ENCODE measurements at regions of chr7 and their contacts with region 1.

Region 1: DNA sequence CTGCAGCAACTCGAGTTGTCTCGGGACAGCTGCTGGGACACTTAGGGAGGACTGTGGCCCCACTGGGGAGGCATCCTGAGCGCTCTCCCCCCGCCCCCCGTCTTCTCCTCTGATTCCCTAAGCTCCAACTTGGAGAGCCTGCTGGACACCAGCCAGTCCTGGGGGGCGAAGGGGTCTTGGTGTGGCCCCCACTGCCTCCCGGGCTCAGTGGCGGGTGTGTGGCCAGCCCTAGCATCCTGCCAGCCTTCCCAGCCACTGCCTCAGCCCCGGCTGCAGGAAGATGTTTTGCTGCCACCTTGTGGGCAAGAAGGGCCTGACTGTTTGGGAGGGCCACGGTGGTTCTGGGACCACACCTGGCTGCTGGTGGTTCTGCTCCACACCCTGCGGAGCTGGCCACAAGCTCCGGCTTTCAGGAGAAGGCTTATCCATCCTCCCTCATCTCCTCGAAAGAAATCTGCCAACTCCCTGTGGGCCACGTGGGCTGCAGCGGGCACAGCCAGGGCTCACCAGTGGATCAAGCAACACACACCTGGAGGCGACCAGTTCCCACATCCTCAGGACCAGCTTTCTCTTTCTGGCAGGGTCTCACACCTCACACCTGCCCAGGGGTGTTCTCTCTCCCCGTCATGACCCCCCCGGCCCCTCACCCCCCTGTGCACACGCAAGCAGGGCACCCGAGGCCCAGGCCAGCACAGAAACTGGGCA is 24.8 kb downstream of the AGAP3 start:
- DNase-seq: peak; percentile 69 to 76 (median 72)
- H3K4me3 ChIP-seq: no peak overlapping the region
- H3K4me3 Mint-ChIP-seq: peak overlapping the region in 1 of 8 donors; percentile 30
- H3K27ac ChIP-seq: no peak overlapping the region
- H3K27ac Mint-ChIP-seq: peak overlapping the region in 1 of 7 donors; percentile 57
- H3K4me1 ChIP-seq: peaks cover 10% of the 10 kb centered on the region
- H3K4me1 Mint-ChIP-seq: peaks cover 1 to 20% (median 10%) of the 10 kb centered on the region in 4 donors
- H3K27me3 ChIP-seq: no peaks in the 10 kb centered on the region
- H3K27me3 Mint-ChIP-seq: no peaks in the 10 kb centered on the region

Region 2: GRCh38 chr7:150778738-150779301 is 332.3 kb before region 1 on chr7:
- CTCF ChIA-PET with region 1: interaction called, 8 read pairs
- POLR2A ChIA-PET with region 1: no interaction called
- intact Hi-C with region 1: loop called (anchors 1 kb)
- DNase-seq: peak; percentile 53 to 61 (median 57)
- H3K4me3 ChIP-seq: no peak overlapping the region
- H3K4me3 Mint-ChIP-seq: no peak overlapping the region
- H3K27ac ChIP-seq: no peak overlapping the region
- H3K27ac Mint-ChIP-seq: no peak overlapping the region
- H3K4me1 ChIP-seq: no peaks in the 10 kb centered on the region
- H3K4me1 Mint-ChIP-seq: peaks cover 0 to 5% (median 5%) of the 10 kb centered on the region in 4 donors
- H3K27me3 ChIP-seq: no peaks in the 10 kb centered on the region
- H3K27me3 Mint-ChIP-seq: peaks cover 0 to 6% of the 10 kb centered on the region in 2 donors

Region 3: DNA sequence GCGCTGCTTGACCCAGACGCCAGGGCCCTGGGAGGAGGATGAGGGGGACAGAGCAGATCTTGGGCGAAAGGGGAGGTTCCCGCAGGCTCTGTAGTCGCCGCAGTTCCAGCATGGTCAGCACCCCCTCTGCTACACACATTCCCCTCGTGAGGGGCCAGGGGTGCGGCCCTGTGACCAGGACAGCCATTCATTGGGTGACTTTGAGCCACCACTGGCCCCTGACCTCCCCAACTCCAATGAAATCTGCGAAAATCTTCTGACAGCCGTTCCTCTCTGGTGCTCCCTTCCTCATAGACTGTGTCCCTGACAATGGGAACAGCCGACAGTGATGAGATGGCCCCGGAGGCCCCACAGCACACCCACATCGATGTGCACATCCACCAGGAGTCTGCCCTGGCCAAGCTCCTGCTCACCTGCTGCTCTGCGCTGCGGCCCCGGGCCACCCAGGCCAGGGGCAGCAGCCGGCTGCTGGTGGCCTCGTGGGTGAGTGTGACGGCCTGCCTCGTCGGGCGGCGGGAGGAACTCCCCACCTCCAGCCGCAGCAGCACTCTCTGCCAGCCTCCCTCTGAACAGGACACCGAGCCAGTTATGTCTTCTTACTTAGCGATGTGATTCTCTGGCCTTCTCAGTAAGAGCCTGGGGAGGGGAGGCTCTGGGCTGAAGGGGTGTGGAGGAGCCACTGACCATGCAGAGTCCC is 309.7 kb before region 1 on chr7:
- CTCF ChIA-PET with region 1: no interaction called
- POLR2A ChIA-PET with region 1: no interaction called
- intact Hi-C with region 1: no loop called
- DNase-seq: no peak
- H3K4me3 ChIP-seq: no peak overlapping the region
- H3K4me3 Mint-ChIP-seq: peak overlapping the region; percentile 11 to 81 (median 74)
- H3K27ac ChIP-seq: no peak overlapping the region
- H3K27ac Mint-ChIP-seq: no peak overlapping the region
- H3K4me1 ChIP-seq: peaks cover 14% of the 10 kb centered on the region
- H3K4me1 Mint-ChIP-seq: peaks cover 2 to 14% (median 4%) of the 10 kb centered on the region in 4 donors
- H3K27me3 ChIP-seq: peaks cover 33% of the 10 kb centered on the region
- H3K27me3 Mint-ChIP-seq: peaks cover 37 to 45% of the 10 kb centered on the region in 2 donors

Region 4: DNA sequence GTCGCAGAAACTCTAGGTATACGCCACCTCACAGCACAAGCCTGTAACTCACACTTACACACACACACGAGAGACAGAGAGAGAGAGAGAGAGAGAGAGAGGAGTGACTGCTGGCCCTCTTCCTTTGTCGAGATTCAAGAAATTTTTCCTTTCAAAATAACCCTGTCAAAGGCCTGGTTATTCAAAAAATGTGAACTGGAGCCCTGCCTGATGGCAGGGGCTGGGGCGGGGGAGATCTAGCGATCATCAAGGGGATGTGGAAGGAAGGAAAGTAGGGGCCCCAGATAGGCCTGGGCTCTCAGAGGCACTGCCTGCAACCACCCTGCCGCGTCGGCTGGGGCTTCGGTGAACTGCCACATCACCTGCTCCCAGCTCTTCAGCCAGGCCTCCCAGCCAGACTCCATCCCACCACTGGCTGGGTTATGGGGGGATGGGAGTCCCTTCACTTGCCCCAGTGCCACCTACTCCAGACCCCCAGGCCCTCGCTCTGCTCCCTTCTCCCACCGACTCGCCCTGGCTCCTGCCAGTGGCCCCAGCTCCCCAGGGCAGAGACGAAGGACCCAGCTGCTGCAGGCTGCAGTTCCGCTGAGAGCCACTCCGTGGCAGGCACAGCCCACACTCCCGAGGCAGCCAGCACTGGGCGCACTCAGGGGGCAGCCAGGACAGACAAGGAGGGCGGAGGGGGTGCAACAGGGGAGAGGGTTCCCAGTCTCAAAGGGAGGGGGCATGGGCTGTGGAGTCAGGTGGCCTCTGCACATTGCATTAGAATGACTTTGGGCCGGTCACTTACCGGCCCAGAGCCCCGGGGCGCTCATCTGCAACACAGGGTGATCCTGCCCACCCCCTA is 148.3 kb before region 1 on chr7:
- CTCF ChIA-PET with region 1: interaction called, 67 read pairs
- POLR2A ChIA-PET with region 1: no interaction called
- intact Hi-C with region 1: loop called (anchors 1 kb)
- DNase-seq: peak in 4 of 5 donors; percentile 58 to 63 (median 62)
- H3K4me3 ChIP-seq: no peak overlapping the region
- H3K4me3 Mint-ChIP-seq: no peak overlapping the region
- H3K27ac ChIP-seq: no peak overlapping the region
- H3K27ac Mint-ChIP-seq: no peak overlapping the region
- H3K4me1 ChIP-seq: peaks cover 21% of the 10 kb centered on the region
- H3K4me1 Mint-ChIP-seq: peaks cover 6 to 15% (median 9%) of the 10 kb centered on the region in 4 donors
- H3K27me3 ChIP-seq: no peaks in the 10 kb centered on the region
- H3K27me3 Mint-ChIP-seq: peaks cover 12 to 13% of the 10 kb centered on the region in 2 donors

Region 5: GRCh38 chr7:151003572-151003971 is 107.5 kb before region 1 on chr7:
- CTCF ChIA-PET with region 1: no interaction called
- POLR2A ChIA-PET with region 1: no interaction called
- intact Hi-C with region 1: no loop called
- DNase-seq: no peak
- H3K4me3 ChIP-seq: no peak overlapping the region
- H3K4me3 Mint-ChIP-seq: no peak overlapping the region
- H3K27ac ChIP-seq: no peak overlapping the region
- H3K27ac Mint-ChIP-seq: peak overlapping the region in 3 of 7 donors; percentile 22 to 80 (median 37)
- H3K4me1 ChIP-seq: peaks cover 41% of the 10 kb centered on the region
- H3K4me1 Mint-ChIP-seq: peaks cover 21 to 52% (median 35%) of the 10 kb centered on the region in 4 donors
- H3K27me3 ChIP-seq: no peaks in the 10 kb centered on the region
- H3K27me3 Mint-ChIP-seq: no peaks in the 10 kb centered on the region

Region 6: GRCh38 chr7:151057989-151058780 is 52.9 kb before region 1 on chr7:
- CTCF ChIA-PET with region 1: interaction called, 5 read pairs
- POLR2A ChIA-PET with region 1: interaction called, 5 read pairs
- intact Hi-C with region 1: loop called (anchors 1 kb)
- DNase-seq: peak; percentile 95 to 99 (median 98)
- H3K4me3 ChIP-seq: peak overlapping the region; percentile 45 to 70
- H3K4me3 Mint-ChIP-seq: peak overlapping the region; percentile 86 to 97 (median 94)
- H3K27ac ChIP-seq: peak overlapping the region; percentile 85
- H3K27ac Mint-ChIP-seq: peak overlapping the region; percentile 85 to 99 (median 96)
- H3K4me1 ChIP-seq: peaks cover 45% of the 10 kb centered on the region
- H3K4me1 Mint-ChIP-seq: peaks cover 18 to 54% (median 37%) of the 10 kb centered on the region in 4 donors
- H3K27me3 ChIP-seq: no peaks in the 10 kb centered on the region
- H3K27me3 Mint-ChIP-seq: peaks cover 0 to 2% of the 10 kb centered on the region in 2 donors

Region 7: DNA sequence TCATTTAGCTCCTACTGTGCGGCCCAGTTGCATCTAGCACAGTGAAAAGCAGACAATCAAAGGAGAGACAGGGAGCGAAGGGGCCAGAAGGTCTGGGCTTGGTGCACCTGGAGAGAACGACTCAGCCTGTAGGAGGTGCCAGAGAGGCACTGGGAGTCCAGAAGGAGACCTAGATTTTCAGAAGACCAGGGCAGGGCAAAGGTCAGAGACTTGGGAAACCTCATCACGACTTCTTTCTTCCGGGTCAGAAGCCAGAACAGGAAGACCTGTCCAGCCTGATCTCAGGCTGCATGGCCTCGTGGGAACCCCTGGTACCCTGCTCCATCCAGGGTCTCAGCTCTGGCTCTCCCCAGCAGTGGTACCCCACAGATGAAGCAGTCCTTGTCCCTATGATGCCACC is 19.7 kb before region 1 on chr7:
- CTCF ChIA-PET with region 1: interaction called, 29 read pairs
- POLR2A ChIA-PET with region 1: no interaction called
- intact Hi-C with region 1: loop called (anchors 1 kb)
- DNase-seq: no peak
- H3K4me3 ChIP-seq: no peak overlapping the region
- H3K4me3 Mint-ChIP-seq: no peak overlapping the region
- H3K27ac ChIP-seq: no peak overlapping the region
- H3K27ac Mint-ChIP-seq: peak overlapping the region in 2 of 7 donors; percentile 2 to 29
- H3K4me1 ChIP-seq: peaks cover 25% of the 10 kb centered on the region
- H3K4me1 Mint-ChIP-seq: peaks cover 11 to 24% (median 18%) of the 10 kb centered on the region in 4 donors
- H3K27me3 ChIP-seq: no peaks in the 10 kb centered on the region
- H3K27me3 Mint-ChIP-seq: no peaks in the 10 kb centered on the region

Region 8: DNA sequence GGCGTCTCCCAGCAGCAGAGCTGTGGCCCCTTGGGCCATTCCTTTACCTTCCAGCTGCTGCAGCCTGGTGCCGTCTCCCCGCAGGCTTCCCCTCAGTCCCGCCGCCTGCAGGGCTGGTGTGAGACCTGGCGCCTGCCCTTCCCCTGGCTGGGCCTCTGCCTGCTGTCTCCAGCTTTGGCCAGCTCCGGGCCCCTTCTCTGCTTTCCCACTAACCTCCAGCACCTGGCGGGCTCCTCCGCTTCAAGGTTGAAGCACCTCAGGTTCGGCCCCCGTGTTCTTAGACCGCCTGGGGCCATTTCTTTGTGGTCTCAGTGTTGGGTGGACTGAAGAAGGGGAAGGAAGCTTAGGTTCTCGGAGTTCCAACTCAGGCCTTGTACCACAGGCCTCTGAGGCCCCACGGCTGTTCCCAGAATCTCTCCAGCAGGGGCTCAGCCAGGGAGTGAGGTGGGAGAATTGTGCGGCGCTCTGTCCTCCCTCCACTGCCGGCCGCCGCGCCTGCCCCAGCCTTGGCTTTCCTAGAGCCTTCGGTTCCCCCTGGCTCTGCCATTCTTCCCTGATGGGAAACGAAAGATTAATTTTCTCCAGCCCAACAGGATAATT is 26.1 kb after region 1 on chr7:
- CTCF ChIA-PET with region 1: no interaction called
- POLR2A ChIA-PET with region 1: no interaction called
- intact Hi-C with region 1: no loop called
- DNase-seq: no peak
- H3K4me3 ChIP-seq: no peak overlapping the region
- H3K4me3 Mint-ChIP-seq: no peak overlapping the region
- H3K27ac ChIP-seq: no peak overlapping the region
- H3K27ac Mint-ChIP-seq: no peak overlapping the region
- H3K4me1 ChIP-seq: no peaks in the 10 kb centered on the region
- H3K4me1 Mint-ChIP-seq: no peaks in the 10 kb centered on the region
- H3K27me3 ChIP-seq: no peaks in the 10 kb centered on the region
- H3K27me3 Mint-ChIP-seq: no peaks in the 10 kb centered on the region

Region 9: DNA sequence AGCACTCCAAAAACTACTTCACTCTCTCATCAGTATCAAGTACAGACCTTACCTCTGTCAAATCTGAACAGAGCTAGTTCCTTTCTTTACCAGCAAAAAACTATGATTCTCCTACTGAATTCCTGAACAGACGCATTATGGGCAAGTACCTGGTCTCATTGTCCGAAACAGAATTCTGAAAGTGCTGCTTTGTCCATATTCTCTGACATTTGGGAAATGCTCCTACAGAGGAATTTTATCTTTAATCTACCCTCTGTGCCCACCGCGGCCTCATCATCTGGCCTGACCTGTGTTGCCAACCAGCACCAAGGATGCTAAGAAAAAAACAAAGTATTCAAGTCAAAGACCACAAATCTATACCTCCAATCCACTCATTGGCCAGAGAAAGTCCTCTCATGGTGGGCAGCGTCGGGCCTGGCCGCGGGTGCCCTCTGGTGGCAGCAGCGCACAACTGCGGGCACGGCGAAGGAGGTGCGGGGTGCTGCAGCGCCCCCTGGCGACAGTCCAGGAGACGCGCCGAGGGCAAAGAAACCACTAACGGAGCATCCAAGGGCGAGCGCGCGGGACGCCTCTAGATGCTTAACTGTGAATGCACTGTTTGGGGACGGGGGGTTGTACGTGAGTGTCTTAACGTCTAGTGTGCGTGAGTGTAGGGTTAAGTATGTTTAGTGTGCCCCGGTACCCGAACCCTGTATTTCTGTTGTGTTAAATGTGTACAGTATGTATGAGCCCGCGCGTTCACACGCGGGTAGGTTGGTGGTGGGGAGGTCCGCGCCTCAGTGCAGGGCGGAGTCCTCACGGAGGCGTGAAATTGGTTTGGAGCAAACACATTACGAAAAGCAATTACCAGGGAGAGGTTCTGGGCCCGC is 61.4 kb after region 1 on chr7:
- CTCF ChIA-PET with region 1: interaction called, 3 read pairs
- POLR2A ChIA-PET with region 1: no interaction called
- intact Hi-C with region 1: loop called (anchors 2 kb)
- DNase-seq: peak; percentile 72 to 80 (median 75)
- H3K4me3 ChIP-seq: no peak overlapping the region
- H3K4me3 Mint-ChIP-seq: peak overlapping the region in 1 of 8 donors; percentile 50
- H3K27ac ChIP-seq: no peak overlapping the region
- H3K27ac Mint-ChIP-seq: peak overlapping the region in 4 of 7 donors; percentile 41 to 65 (median 62)
- H3K4me1 ChIP-seq: no peaks in the 10 kb centered on the region
- H3K4me1 Mint-ChIP-seq: peaks cover 11 to 21% (median 16%) of the 10 kb centered on the region in 4 donors
- H3K27me3 ChIP-seq: peaks cover 14% of the 10 kb centered on the region
- H3K27me3 Mint-ChIP-seq: peaks cover 25 to 40% of the 10 kb centered on the region in 2 donors